Activated CD4-positive, alpha-beta T cell treated with anti-CD3 and anti-CD28 coated beads for 36 hours (primary cell): ENCODE measurements at regions of chr22 and their contacts with region 1.

Region 1: GRCh38 chr22:31630331-31631329 is 31.4 kb downstream of the PISD start:
- DNase-seq: peak; percentile 93
- ATAC-seq: peak; percentile 82
- H3K4me3 Mint-ChIP-seq: peak overlapping the region; percentile 81
- H3K27ac Mint-ChIP-seq: peak overlapping the region; percentile 89
- H3K4me1 Mint-ChIP-seq: peaks cover 60% of the 10 kb centered on the region
- H3K27me3 Mint-ChIP-seq: no peaks in the 10 kb centered on the region

Region 2: DNA sequence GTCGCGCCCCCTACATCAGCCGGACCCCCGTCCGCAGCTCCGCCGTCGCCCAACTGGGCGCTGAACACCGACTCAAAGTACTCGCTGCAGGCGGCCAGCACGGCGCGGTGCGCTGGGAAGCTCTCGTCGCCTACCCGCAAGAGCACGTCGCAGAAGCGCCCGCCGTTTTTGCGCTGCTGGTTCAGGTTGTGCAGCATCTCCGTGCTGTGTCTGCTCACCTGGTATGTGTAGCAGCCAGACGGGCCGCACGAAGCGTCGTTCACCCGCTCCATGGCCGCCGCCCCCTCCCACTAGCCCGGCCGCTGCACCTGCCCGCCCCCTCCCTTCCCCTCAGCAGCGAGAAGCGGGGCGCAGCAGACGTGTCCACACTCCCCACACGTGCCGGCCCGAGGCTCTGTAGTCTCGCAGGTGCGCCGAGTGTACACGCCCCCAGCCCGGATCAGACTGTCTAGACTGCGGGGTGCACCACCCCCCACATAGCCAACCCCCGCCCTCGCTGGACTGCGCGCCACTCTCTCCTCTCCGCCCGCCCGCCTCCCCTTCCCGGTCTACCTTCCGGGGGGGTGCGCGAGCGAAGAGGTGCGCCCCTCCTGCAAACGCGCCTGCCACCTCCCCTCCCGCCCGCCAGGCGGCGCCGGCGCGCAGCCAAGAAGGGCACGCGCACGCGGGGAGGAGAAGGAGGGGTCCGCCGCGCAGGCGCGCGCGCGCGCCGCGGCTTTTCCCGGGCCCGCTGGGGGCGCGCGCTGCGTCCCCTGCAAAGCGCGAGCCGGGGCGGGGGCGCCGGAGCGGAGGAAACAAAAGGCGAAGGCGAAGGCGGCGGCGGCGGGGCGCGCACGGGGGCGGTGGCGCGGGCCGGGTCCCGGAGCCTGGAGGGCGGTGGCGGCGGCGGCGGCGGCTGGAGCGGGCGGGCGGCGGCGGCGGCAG is 285.0 kb before region 1 on chr22:
- CTCF ChIA-PET with region 1: interaction called, 5 read pairs
- POLR2A ChIA-PET with region 1: no interaction called
- intact Hi-C with region 1: loop called (anchors 1 to 5 kb)
- DNase-seq: peak; percentile 93
- ATAC-seq: peak; percentile 59
- H3K4me3 Mint-ChIP-seq: peak overlapping the region; percentile 90
- H3K27ac Mint-ChIP-seq: peak overlapping the region; percentile 92
- H3K4me1 Mint-ChIP-seq: peaks cover 44% of the 10 kb centered on the region
- H3K27me3 Mint-ChIP-seq: no peaks in the 10 kb centered on the region

Region 3: GRCh38 chr22:31451709-31452571 is 178.7 kb before region 1 on chr22:
- CTCF ChIA-PET with region 1: interaction called, 8 read pairs
- POLR2A ChIA-PET with region 1: no interaction called
- intact Hi-C with region 1: loop called (anchors 1 to 5 kb)
- DNase-seq: no peak
- ATAC-seq: peak; percentile 83
- H3K4me3 Mint-ChIP-seq: no peak overlapping the region
- H3K27ac Mint-ChIP-seq: peak overlapping the region; percentile 65
- H3K4me1 Mint-ChIP-seq: no peaks in the 10 kb centered on the region
- H3K27me3 Mint-ChIP-seq: no peaks in the 10 kb centered on the region

Region 4: DNA sequence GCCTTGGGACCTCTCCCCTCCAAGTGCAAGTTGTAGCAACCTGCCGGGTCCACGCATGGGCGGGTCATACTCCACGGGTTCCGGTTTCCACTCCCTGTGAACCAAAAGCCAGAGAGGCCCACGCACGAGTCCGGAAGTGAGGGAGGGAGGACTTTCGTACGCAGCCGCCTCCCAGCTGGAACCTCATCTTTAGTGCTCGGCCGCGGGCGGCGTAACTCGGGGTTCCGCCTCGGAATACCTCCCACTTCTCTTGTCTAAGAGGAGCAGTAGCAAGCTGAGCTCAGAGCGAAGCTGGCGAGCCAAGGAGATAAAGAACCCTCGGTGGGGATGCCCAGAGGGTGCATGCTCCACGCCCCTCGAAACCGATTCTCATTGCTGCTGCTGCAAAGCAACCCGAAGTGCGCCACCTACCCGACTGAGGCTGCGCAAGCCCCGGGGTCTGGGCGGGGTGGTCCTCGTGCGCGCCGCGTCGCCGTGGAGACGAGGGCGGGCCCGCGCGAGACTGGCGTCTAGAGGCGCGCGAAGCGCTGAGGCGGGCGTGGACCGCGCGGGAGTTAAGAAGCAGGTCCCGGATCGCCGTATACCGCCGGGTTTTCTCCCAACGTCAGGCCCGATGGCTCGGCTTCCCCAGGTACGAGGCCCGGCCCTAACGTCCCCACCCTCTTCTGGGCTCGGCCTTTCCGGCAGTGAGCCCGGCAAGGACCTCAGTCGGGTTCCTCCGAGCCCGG is 134.5 kb before region 1 on chr22 and contains the start of gene SFI1:
- CTCF ChIA-PET with region 1: no interaction called
- POLR2A ChIA-PET with region 1: interaction called, 7 read pairs
- intact Hi-C with region 1: loop called (anchors 1 to 2 kb)
- DNase-seq: peak; percentile 97
- ATAC-seq: peak; percentile 87
- H3K4me3 Mint-ChIP-seq: peak within 1 kb of the TSS; percentile 85
- H3K27ac Mint-ChIP-seq: peak within 1 kb of the TSS; percentile 93
- H3K4me1 Mint-ChIP-seq: peaks cover 55% of the 10 kb centered on the region
- H3K27me3 Mint-ChIP-seq: no peaks in the 10 kb centered on the region
- total RNA-seq, gene SFI1: 221 to 234 TPM

Region 5: DNA sequence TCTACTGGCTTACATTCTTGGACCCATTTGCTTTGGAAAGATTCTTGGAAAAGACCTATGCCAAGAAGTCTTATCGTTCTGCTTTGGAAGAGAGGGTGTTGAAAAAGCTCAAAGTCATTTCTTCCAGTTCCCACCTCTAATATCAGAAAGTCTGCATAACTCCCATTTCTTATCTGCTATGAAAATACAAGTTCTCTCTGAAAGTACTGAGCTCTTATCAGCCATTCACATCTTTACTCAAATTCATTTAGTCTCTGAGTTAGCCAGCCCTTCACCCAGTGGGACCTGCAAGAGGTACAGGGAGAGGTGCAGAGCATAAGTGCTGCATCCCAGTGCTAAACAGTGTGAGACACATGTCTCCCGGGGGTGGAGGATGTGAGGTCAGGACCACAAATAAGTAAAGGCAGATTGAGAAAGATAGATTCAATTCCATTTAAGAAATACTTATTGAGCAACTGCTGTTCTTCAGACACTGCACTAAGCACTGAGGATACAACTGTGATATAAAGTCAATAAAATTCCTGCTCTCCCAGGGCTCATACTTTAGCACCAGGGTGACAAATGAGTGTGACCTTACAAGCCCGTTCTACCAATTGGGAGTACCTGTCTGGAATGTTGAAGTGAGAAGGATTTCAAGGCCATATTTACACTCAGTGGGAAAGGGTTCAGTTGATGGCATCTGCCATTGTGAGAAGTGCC is 45.3 kb before region 1 on chr22:
- CTCF ChIA-PET with region 1: interaction called, 4 read pairs
- POLR2A ChIA-PET with region 1: no interaction called
- intact Hi-C with region 1: loop called in 1 of 2 experiments (anchors 2 kb)
- DNase-seq: peak; percentile 35
- ATAC-seq: peak; percentile 47
- H3K4me3 Mint-ChIP-seq: no peak overlapping the region
- H3K27ac Mint-ChIP-seq: peak overlapping the region; percentile 64
- H3K4me1 Mint-ChIP-seq: peaks cover 53% of the 10 kb centered on the region
- H3K27me3 Mint-ChIP-seq: no peaks in the 10 kb centered on the region